Activated CD4-positive, alpha-beta T cell treated with anti-CD3 and anti-CD28 coated beads, Interleukin-2, amount 10 ng/mL, durations not matched to agents 7 days and 5 days (primary cell): ENCODE measurements at regions of chr12 and their contacts with region 1.

Region 1: DNA sequence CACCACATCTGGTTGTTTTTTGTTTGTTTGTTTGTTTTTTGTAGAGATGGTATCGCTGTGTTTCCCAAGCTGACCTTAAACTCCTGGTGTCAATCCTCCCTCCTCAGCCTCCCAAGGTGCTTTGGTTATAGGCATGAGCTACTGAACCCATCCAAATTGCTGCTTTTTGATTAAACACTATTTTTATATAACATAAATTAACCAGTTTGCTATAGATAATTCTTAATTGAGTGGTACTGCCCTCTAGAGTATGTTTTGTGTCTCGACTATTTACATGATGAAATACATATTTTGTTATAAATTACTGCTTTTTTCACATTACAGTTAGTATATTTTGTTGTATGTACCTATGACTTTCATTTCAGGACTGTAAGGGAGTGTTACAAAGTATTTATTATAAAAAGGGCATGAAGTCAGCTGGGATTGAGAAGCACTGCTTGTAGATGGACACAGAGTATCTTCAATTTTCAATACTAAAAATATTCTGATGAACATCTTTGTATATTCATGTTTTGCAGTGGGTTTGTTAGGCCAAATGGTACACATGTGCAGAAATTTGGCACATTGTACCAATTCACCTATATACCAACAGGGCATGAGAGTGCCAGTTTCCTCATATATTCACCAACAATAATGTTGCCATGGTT is 14.9 kb upstream of the SCAF11 start:
- DNase-seq: no peak
- H3K4me3 Mint-ChIP-seq: no peak overlapping the region
- H3K27ac Mint-ChIP-seq: no peak overlapping the region
- H3K4me1 Mint-ChIP-seq: no peaks in the 10 kb centered on the region
- H3K27me3 Mint-ChIP-seq: peaks cover 1% of the 10 kb centered on the region

Region 2: DNA sequence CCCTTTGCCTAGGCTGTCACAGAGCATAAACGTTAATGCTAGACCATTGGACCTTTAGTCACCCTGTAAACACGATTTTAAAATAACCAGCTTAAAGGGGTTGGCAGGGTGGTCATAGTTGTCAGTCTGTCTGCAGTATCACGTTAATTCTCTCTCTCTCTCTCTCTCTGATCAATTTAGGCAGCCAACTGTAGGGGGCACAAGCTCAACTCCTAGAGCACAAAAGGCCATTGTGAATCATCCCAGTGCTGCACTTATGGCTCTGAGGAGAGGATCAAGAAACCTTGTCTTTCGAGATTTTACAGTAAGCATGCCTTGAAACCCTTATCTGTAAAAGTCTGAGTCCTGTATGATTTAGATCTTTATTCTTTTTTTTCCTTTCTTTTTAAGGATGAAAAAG is 112.0 kb before region 1 on chr12:
- CTCF ChIA-PET with region 1: no interaction called
- POLR2A ChIA-PET with region 1: no interaction called
- DNase-seq: no peak
- H3K4me3 Mint-ChIP-seq: no peak overlapping the region
- H3K27ac Mint-ChIP-seq: no peak overlapping the region
- H3K4me1 Mint-ChIP-seq: peaks cover 26% of the 10 kb centered on the region
- H3K27me3 Mint-ChIP-seq: no peaks in the 10 kb centered on the region

Region 3: GRCh38 chr12:45990468-45991283 is 14.6 kb before region 1 on chr12 and contains the start of gene SCAF11:
- CTCF ChIA-PET with region 1: interaction called, 13 read pairs
- POLR2A ChIA-PET with region 1: no interaction called
- DNase-seq: peak; percentile 100
- H3K4me3 Mint-ChIP-seq: peak within 1 kb of the TSS; percentile 91
- H3K27ac Mint-ChIP-seq: peak within 1 kb of the TSS; percentile 98
- H3K4me1 Mint-ChIP-seq: peaks cover 38% of the 10 kb centered on the region
- H3K27me3 Mint-ChIP-seq: no peaks in the 10 kb centered on the region
- total RNA-seq, gene SCAF11: 134 to 140 TPM

Region 4: GRCh38 chr12:46020768-46021167 is 15.5 kb after region 1 on chr12:
- CTCF ChIA-PET with region 1: no interaction called
- POLR2A ChIA-PET with region 1: no interaction called
- DNase-seq: no peak
- H3K4me3 Mint-ChIP-seq: no peak overlapping the region
- H3K27ac Mint-ChIP-seq: no peak overlapping the region
- H3K4me1 Mint-ChIP-seq: no peaks in the 10 kb centered on the region
- H3K27me3 Mint-ChIP-seq: peaks cover 19% of the 10 kb centered on the region

Region 5: GRCh38 chr12:46450279-46450748 is 445.0 kb after region 1 on chr12:
- CTCF ChIA-PET with region 1: no interaction called
- POLR2A ChIA-PET with region 1: no interaction called
- DNase-seq: no peak
- H3K4me3 Mint-ChIP-seq: no peak overlapping the region
- H3K27ac Mint-ChIP-seq: no peak overlapping the region
- H3K4me1 Mint-ChIP-seq: peaks cover 38% of the 10 kb centered on the region
- H3K27me3 Mint-ChIP-seq: no peaks in the 10 kb centered on the region